CD4-positive, alpha-beta memory T cell (primary cell): ENCODE measurements at regions of chr5 and their contacts with region 1.

Region 1: DNA sequence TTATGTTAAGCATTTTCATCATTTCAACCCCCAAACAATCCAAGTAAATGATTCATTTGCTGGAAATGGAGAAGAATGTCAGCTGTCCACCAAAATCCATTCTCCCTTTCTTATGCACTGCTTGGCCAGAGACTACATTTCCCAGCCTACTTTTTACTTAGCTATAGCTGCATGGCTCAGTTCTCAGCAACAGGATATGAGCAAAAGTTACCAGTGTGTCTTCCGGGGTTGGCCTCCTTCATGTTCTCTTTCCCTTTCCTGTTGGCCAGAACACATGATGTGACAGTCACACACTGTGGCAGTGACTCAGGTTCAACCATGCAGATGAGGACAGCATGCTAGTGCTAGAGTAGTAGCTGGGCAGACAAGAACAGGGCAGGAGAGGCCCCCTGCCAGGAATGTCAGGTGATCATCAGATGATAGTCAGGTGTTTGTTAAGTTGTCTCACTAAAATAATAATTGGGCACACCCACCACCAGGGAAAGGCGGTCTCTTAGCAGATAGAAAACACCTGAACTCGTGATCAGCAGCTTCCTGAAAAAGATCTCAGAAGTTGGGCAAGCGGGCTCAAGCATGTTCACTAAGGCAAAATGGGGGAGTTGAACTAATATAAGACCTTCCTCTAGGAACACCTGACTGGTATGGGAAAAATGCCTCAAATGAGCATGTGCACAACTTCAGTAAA is 12.2 kb downstream of the GPR150 start:
- DNase-seq: peak; percentile 74 to 92 (median 84)
- H3K4me3 ChIP-seq: peak overlapping the region in 1 of 2 donors; percentile 5
- H3K4me3 Mint-ChIP-seq: peak overlapping the region; percentile 36 to 80 (median 55)
- H3K27ac ChIP-seq: peak overlapping the region; percentile 56
- H3K27ac Mint-ChIP-seq: peak overlapping the region; percentile 90 to 99 (median 96)
- H3K4me1 ChIP-seq: peaks cover 15% of the 10 kb centered on the region
- H3K4me1 Mint-ChIP-seq: peaks cover 16 to 43% (median 26%) of the 10 kb centered on the region in 4 donors
- H3K27me3 ChIP-seq: no peaks in the 10 kb centered on the region
- H3K27me3 Mint-ChIP-seq: peaks cover 0 to 6% of the 10 kb centered on the region in 2 donors

Region 2: DNA sequence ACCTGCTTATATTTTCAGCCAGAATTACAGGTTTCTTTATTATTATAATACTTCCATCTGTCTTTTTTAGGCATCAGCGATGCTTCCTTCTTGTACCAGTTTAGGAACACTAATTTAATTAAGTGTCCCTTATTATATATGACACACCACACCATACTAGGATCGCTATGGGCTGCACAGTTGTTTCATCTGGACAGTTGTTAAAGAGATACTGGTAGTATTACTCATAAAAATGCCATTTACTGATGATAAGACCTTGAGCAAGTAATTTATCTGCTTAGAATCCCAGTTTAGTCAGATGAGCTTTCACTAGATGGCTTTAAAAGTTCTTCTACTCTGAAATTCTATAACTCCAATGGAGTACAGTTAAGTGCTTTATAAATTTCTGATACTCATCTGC is 60.1 kb before region 1 on chr5:
- CTCF ChIA-PET with region 1: no interaction called
- POLR2A ChIA-PET with region 1: no interaction called
- intact Hi-C with region 1: no loop called
- DNase-seq: no peak
- H3K4me3 ChIP-seq: no peak overlapping the region
- H3K4me3 Mint-ChIP-seq: no peak overlapping the region
- H3K27ac ChIP-seq: no peak overlapping the region
- H3K27ac Mint-ChIP-seq: no peak overlapping the region
- H3K4me1 ChIP-seq: no peaks in the 10 kb centered on the region
- H3K4me1 Mint-ChIP-seq: peaks cover 0 to 5% (median 2%) of the 10 kb centered on the region in 4 donors
- H3K27me3 ChIP-seq: no peaks in the 10 kb centered on the region
- H3K27me3 Mint-ChIP-seq: no peaks in the 10 kb centered on the region

Region 3: DNA sequence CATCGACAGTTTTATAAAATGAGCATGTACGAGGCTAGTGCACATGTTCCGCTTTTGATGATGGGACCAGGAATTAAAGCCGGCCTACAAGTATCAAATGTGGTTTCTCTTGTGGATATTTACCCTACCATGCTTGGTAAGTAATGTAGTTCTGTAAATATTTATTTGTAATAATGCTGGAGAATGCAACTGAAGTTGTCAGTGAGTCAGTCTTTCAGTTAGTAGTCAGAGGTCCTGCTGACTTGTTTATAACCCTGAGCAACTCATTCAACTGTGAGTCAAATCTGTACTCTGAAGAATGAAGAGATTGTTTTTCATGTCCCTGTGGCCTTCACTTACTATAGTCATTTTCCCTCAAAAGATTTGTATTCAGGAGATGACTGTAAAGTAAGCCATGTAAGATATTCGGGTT is 40.6 kb before region 1 on chr5:
- CTCF ChIA-PET with region 1: no interaction called
- POLR2A ChIA-PET with region 1: no interaction called
- intact Hi-C with region 1: no loop called
- DNase-seq: no peak
- H3K4me3 ChIP-seq: no peak overlapping the region
- H3K4me3 Mint-ChIP-seq: no peak overlapping the region
- H3K27ac ChIP-seq: no peak overlapping the region
- H3K27ac Mint-ChIP-seq: peak overlapping the region in 5 of 7 donors; percentile 13 to 85 (median 68)
- H3K4me1 ChIP-seq: peaks cover 17% of the 10 kb centered on the region
- H3K4me1 Mint-ChIP-seq: peaks cover 16 to 24% (median 20%) of the 10 kb centered on the region in 4 donors
- H3K27me3 ChIP-seq: no peaks in the 10 kb centered on the region
- H3K27me3 Mint-ChIP-seq: no peaks in the 10 kb centered on the region

Region 4: DNA sequence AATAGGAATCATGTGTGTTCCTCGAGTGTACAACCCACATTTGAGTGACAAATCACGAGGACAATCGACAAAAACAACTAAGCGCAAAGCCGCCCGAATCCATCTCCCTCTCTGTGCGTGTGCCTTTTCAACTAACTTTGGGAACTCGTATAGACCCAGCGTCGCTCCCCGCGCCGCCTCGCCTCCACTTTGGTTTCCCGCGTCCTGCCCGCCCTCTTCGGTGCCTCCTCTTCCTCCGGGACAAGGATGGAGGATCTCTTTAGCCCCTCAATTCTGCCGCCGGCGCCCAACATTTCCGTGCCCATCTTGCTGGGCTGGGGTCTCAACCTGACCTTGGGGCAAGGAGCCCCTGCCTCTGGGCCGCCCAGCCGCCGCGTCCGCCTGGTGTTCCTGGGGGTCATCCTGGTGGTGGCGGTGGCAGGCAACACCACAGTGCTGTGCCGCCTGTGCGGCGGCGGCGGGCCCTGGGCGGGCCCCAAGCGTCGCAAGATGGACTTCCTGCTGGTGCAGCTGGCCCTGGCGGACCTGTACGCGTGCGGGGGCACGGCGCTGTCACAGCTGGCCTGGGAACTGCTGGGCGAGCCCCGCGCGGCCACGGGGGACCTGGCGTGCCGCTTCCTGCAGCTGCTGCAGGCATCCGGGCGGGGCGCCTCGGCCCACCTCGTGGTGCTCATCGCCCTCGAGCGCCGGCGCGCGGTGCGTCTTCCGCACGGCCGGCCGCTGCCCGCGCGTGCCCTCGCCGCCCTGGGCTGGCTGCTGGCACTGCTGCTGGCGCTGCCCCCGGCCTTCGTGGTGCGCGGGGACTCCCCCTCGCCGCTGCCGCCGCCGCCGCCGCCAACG is 11.9 kb before region 1 on chr5 and contains the start of gene GPR150:
- CTCF ChIA-PET with region 1: interaction called, 19 read pairs
- POLR2A ChIA-PET with region 1: interaction called, 87 read pairs
- intact Hi-C with region 1: loop called (anchors 1 kb)
- DNase-seq: peak; percentile 58 to 72 (median 64)
- H3K4me3 ChIP-seq: peak within 1 kb of the TSS; percentile 38 to 73
- H3K4me3 Mint-ChIP-seq: peak within 1 kb of the TSS; percentile 90 to 97 (median 94)
- H3K27ac ChIP-seq: peak within 1 kb of the TSS; percentile 69
- H3K27ac Mint-ChIP-seq: peak within 1 kb of the TSS; percentile 23 to 95 (median 86)
- H3K4me1 ChIP-seq: peaks cover 72% of the 10 kb centered on the region
- H3K4me1 Mint-ChIP-seq: peaks cover 57 to 76% (median 67%) of the 10 kb centered on the region in 4 donors
- H3K27me3 ChIP-seq: no peaks in the 10 kb centered on the region
- H3K27me3 Mint-ChIP-seq: no peaks in the 10 kb centered on the region
- total RNA-seq, gene GPR150: 1.5 to 2.4 TPM